IMR-90 (cell line): ENCODE measurements at regions of chr16 and their contacts with region 1.

Region 1: DNA sequence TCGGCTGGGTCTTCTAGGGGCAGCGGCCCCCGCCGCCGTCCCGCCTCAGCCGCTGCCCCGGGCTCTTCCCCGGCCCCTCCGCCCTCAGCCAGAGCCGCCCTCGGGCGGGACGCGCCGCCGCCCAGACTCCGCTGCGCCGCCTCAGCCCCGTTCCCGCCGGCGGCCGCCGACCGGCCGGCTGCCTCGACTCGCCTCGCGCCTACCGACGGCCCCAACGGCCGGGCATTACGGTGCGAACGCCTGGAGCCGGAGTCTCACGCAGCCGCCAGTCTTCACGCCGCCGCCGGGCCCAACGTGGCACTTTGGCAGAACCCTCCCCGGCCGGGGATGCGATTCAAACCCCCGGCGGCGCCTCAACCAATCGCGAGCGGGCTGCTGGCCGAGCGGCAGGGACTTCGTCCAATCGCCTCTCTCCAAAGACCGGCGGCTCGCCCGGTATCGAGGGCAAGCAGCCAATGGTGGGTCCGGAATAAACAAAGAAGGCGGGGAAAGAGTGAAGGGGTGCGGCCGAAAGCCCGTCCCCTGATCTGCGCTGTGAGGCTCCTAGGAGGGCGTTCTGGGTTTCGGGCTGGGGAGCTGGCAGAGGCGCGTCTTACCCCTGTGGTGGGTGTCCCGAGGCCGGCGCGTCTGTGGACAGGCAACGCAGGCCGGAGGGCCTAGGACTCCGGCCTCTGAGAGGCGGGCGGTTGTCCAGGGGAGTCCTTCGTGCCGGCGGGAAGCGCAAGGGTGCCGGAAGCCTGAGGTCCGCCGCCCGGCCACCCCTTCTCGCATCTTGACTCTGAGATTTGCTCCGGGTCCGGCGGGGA is at the start of gene CDR2:
- DNase-seq: peak; percentile 94
- ATAC-seq: peak; percentile 88
- H3K4me3 ChIP-seq: peak within 1 kb of the TSS; percentile 66
- H3K27ac ChIP-seq: peak within 1 kb of the TSS; percentile 91
- H3K4me1 ChIP-seq: peaks cover 8% of the 10 kb centered on the region; the same call in 1 of the 2 replicates
- H3K27me3 ChIP-seq: no peaks in the 10 kb centered on the region
- CTCF ChIP-seq: no peak
- POLR2A ChIP-seq: peak; percentile 95
- RAD21 ChIP-seq: no peak
- total RNA-seq, gene CDR2: 44.2 and 48.4 TPM in 2 replicates

Region 2: GRCh38 chr16:21523411-21524067 is 851.0 kb before region 1 on chr16:
- CTCF ChIA-PET with region 1: no interaction called
- POLR2A ChIA-PET with region 1: no interaction called
- dilution Hi-C with region 1: no loop called
- in situ Hi-C with region 1: no loop called
- intact Hi-C with region 1: no loop called
- DNase-seq: no peak
- ATAC-seq: no peak
- H3K4me3 ChIP-seq: no peak overlapping the region
- H3K27ac ChIP-seq: no peak overlapping the region
- H3K4me1 ChIP-seq: peaks cover 10% of the 10 kb centered on the region
- H3K27me3 ChIP-seq: peaks cover 7% of the 10 kb centered on the region; the same call in 1 of the 2 replicates
- CTCF ChIP-seq: no peak
- POLR2A ChIP-seq: no peak
- RAD21 ChIP-seq: no peak

Region 3: GRCh38 chr16:22340945-22341344 is 33.6 kb before region 1 on chr16:
- CTCF ChIA-PET with region 1: no interaction called
- POLR2A ChIA-PET with region 1: no interaction called
- dilution Hi-C with region 1: no loop called
- in situ Hi-C with region 1: no loop called
- intact Hi-C with region 1: no loop called
- DNase-seq: no peak
- ATAC-seq: no peak
- H3K4me3 ChIP-seq: no peak overlapping the region
- H3K27ac ChIP-seq: no peak overlapping the region
- H3K4me1 ChIP-seq: 0 out of 2 replicates have a peak, but pooled peaks cover under 1% of the 10 kb centered on the region
- H3K27me3 ChIP-seq: no peaks in the 10 kb centered on the region
- CTCF ChIP-seq: no peak
- POLR2A ChIP-seq: no peak
- RAD21 ChIP-seq: no peak

Region 4: DNA sequence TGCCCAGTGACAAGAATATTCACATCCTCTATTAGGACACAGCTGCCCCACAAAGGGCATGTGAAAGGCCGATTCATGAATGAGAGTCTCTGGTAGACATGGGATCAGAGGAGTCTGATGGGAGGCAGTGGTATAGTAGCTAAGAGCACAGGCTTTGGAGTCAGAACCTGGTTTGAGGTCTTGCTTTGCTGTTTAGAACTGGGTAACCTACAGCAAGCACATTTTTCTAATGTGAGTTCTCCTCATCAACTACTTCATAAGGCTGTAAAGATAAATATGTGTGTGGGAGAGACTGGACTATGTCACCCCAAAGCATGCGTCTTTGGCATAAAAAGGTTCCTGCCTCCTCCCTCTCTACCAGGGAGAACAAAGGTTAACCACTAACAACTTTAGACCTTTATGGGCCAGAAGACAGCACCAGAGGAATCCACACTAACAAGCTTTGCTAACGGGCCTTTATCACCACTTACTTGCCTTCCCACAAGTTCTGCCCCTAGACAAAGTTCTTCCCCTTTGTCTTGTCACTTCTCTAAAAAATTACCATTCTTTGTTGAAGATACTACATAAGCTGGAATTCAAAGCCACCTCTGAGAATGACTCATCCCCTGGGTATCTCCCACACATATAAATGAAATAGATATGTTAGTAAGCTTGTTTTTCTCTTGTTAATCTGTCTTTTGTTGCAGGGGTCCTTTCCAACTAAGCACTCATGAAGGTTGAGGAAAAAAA is 21.2 kb before region 1 on chr16:
- CTCF ChIA-PET with region 1: no interaction called
- POLR2A ChIA-PET with region 1: no interaction called
- dilution Hi-C with region 1: no loop called
- in situ Hi-C with region 1: no loop called
- intact Hi-C with region 1: loop called (anchors 2 kb)
- DNase-seq: peak; percentile 89
- ATAC-seq: peak; percentile 80
- H3K4me3 ChIP-seq: no peak overlapping the region
- H3K27ac ChIP-seq: peak overlapping the region; percentile 99
- H3K4me1 ChIP-seq: peaks cover 16% of the 10 kb centered on the region
- H3K27me3 ChIP-seq: no peaks in the 10 kb centered on the region
- CTCF ChIP-seq: no peak
- POLR2A ChIP-seq: no peak
- RAD21 ChIP-seq: 0 out of 2 replicates have a peak, but pooled peaks have one; percentile 1

Region 5: GRCh38 chr16:22386976-22387375 is 12.5 kb after region 1 on chr16:
- CTCF ChIA-PET with region 1: no interaction called
- POLR2A ChIA-PET with region 1: interaction called, 3 read pairs
- dilution Hi-C with region 1: no loop called
- in situ Hi-C with region 1: no loop called
- intact Hi-C with region 1: loop called (anchors 1 kb)
- DNase-seq: peak; percentile 95
- ATAC-seq: peak; percentile 96
- H3K4me3 ChIP-seq: no peak overlapping the region
- H3K27ac ChIP-seq: peak overlapping the region; percentile 41; the same call in 1 of the 2 replicates
- H3K4me1 ChIP-seq: peaks cover 11% of the 10 kb centered on the region
- H3K27me3 ChIP-seq: no peaks in the 10 kb centered on the region
- CTCF ChIP-seq: no peak
- POLR2A ChIP-seq: no peak
- RAD21 ChIP-seq: no peak

Region 6: GRCh38 chr16:23286131-23286532 is 911.6 kb after region 1 on chr16:
- CTCF ChIA-PET with region 1: no interaction called
- POLR2A ChIA-PET with region 1: no interaction called
- dilution Hi-C with region 1: no loop called
- in situ Hi-C with region 1: no loop called
- intact Hi-C with region 1: no loop called
- DNase-seq: peak; percentile 59
- ATAC-seq: no peak
- H3K4me3 ChIP-seq: no peak overlapping the region
- H3K27ac ChIP-seq: no peak overlapping the region
- H3K4me1 ChIP-seq: no peaks in the 10 kb centered on the region
- H3K27me3 ChIP-seq: no peaks in the 10 kb centered on the region; the same call in 1 of the 2 replicates
- CTCF ChIP-seq: no peak
- POLR2A ChIP-seq: no peak
- RAD21 ChIP-seq: no peak

Region 7: DNA sequence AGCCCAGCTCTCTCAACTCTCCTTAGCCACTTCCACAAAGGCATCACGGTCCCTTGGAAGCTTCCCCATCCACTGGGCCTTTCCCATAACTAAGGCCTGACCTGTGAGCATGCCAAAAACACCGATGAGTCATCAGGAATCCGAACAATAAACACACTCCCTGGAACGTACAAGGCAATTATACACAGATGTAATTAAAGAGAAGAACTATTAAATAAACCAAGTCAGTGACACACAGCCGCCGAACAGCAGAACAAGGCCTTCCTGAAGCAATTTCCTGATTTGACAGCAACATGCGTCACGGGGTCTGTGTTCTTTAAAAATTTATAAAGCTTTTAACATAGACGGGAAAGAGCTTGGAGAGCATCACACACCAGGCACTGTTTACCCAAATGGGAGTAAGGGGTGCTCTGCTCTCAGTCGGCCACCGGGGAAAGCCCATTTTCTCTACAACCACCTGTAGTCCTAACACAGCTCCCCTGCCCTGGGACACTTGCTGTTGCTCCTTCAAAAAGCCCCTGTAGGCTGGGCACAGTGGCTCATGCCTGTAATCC is 1049.1 kb after region 1 on chr16:
- CTCF ChIA-PET with region 1: no interaction called
- POLR2A ChIA-PET with region 1: no interaction called
- dilution Hi-C with region 1: no loop called
- in situ Hi-C with region 1: no loop called
- intact Hi-C with region 1: no loop called
- DNase-seq: peak; percentile 99
- ATAC-seq: peak; percentile 86
- H3K4me3 ChIP-seq: no peak overlapping the region
- H3K27ac ChIP-seq: peak overlapping the region; percentile 73
- H3K4me1 ChIP-seq: peaks cover 24% of the 10 kb centered on the region
- H3K27me3 ChIP-seq: no peaks in the 10 kb centered on the region
- CTCF ChIP-seq: no peak
- POLR2A ChIP-seq: no peak
- RAD21 ChIP-seq: no peak